ENCODE measurements at regions of chr2 and their contacts with region 1.

Region 1: DNA sequence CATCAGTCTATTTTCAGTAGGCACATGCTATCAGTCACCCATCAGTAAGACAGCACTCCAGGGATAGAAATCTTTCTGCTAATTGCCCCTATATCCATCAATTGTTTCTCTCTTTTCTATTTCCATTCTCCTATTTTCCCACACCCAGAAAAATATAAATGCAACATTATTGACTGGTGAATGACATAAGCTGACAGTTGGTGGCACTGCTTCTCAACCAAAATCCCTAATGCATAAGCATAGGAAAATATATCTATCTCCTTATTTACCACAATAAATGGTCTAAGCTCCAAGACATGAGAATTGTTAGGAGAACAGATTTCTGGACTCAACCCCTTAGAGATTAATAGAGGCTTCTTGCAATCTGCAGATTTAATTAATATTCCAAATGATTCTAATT is 64.0 kb upstream of the REG3A start:
- DNase-seq: no peak
- H3K4me3 ChIP-seq: no peak overlapping the region
- H3K27ac ChIP-seq: no peak overlapping the region
- H3K4me1 ChIP-seq: peaks cover 0 to 6% (median 2%) of the 10 kb centered on the region in 4 donors
- H3K27me3 ChIP-seq: no peaks in the 10 kb centered on the region
- CTCF ChIP-seq: no peak
- EP300 ChIP-seq: no peak
- POLR2A ChIP-seq: no peak

Region 2: GRCh38 chr2:78967294-78967693 is 256.2 kb before region 1 on chr2:
- intact Hi-C with region 1: no loop called
- DNase-seq: no peak
- H3K4me3 ChIP-seq: no peak overlapping the region
- H3K27ac ChIP-seq: no peak overlapping the region
- H3K4me1 ChIP-seq: no peaks in the 10 kb centered on the region
- H3K27me3 ChIP-seq: no peaks in the 10 kb centered on the region
- CTCF ChIP-seq: no peak
- EP300 ChIP-seq: no peak
- POLR2A ChIP-seq: no peak

Region 3: DNA sequence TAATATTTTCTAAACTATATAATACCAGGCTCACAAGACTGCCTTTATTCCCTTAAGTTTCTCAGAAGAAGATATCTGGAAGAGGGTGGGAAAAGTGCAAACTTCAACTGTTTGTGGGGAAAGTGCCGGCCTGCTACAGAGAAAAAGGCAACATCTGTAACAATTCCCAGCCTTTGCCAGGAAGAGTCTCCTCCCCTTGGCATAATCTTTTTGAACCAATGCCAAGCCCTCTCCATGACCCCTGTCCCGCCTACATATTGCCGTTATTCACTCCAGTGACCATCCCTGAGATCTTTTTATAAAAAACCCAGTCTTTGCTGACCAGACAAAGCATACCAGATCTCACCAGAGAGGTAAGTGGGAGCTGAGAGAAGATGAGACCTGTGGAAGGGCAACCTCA is 198.1 kb before region 1 on chr2 and contains the start of gene REG3G:
- intact Hi-C with region 1: loop called (anchors 10 kb)
- DNase-seq: peak in 1 of 2 donors; percentile 41
- H3K4me3 ChIP-seq: no peak within 1 kb of the TSS
- H3K27ac ChIP-seq: no peak within 1 kb of the TSS
- H3K4me1 ChIP-seq: no peaks in the 10 kb centered on the region
- H3K27me3 ChIP-seq: peaks cover 0 to 3% (median 0%) of the 10 kb centered on the region in 3 donors
- CTCF ChIP-seq: no peak
- EP300 ChIP-seq: no peak
- POLR2A ChIP-seq: no peak
- total RNA-seq, gene REG3G: not detected

Region 4: DNA sequence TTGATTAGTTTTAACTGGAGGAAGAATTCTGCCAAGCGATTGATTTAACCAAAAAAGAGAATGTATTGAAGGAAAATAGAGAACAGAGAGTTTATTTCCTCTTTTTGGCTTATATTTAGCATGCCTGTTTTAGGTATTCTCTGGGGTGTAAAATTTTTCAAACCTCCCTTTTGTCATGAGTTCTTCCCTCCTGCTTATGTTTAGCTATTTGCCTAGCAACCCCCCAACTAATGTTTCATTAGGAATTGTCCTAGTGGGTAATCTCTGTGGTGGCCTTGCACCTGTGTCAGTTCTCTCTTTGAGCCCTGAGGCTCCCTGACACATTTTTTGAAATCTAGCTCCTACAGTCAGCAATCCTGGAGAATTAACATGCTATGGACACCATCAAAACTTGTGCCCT is 123.3 kb before region 1 on chr2:
- intact Hi-C with region 1: no loop called
- DNase-seq: no peak
- H3K4me3 ChIP-seq: no peak overlapping the region
- H3K27ac ChIP-seq: no peak overlapping the region
- H3K4me1 ChIP-seq: no peaks in the 10 kb centered on the region
- H3K27me3 ChIP-seq: no peaks in the 10 kb centered on the region
- CTCF ChIP-seq: no peak
- EP300 ChIP-seq: no peak
- POLR2A ChIP-seq: no peak

Region 5: DNA sequence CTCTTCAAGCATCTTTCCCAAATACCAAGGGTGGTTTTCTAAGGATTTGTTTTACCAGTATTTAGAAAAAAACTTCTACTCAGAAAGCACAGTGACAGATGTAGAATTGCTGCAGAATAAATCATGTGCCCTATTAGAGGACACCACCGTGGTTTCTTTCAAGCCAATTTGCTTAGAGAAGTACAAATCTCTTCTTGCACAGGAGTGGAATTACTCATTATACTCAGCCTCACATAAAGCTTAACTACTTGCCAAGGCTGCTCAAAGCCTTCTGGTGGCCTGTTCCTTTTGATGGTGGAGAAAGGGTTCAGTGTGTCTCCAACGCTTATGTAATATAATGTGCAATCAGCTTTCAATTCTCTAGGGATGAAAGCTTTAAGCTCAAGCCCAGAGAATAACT is 222.8 kb after region 1 on chr2:
- intact Hi-C with region 1: no loop called
- DNase-seq: no peak
- H3K4me3 ChIP-seq: no peak overlapping the region
- H3K27ac ChIP-seq: no peak overlapping the region
- H3K4me1 ChIP-seq: no peaks in the 10 kb centered on the region
- H3K27me3 ChIP-seq: no peaks in the 10 kb centered on the region
- CTCF ChIP-seq: no peak
- EP300 ChIP-seq: no peak
- POLR2A ChIP-seq: no peak

Measured in stomach (tissue), 19 donors.